Activated CD4-positive, alpha-beta T cell treated with anti-CD3 and anti-CD28 coated beads, Interleukin-2, amount 10 ng/mL, durations not matched to agents 7 days and 5 days (primary cell): ENCODE measurements at regions of chr6 and their contacts with region 1.

Region 1: DNA sequence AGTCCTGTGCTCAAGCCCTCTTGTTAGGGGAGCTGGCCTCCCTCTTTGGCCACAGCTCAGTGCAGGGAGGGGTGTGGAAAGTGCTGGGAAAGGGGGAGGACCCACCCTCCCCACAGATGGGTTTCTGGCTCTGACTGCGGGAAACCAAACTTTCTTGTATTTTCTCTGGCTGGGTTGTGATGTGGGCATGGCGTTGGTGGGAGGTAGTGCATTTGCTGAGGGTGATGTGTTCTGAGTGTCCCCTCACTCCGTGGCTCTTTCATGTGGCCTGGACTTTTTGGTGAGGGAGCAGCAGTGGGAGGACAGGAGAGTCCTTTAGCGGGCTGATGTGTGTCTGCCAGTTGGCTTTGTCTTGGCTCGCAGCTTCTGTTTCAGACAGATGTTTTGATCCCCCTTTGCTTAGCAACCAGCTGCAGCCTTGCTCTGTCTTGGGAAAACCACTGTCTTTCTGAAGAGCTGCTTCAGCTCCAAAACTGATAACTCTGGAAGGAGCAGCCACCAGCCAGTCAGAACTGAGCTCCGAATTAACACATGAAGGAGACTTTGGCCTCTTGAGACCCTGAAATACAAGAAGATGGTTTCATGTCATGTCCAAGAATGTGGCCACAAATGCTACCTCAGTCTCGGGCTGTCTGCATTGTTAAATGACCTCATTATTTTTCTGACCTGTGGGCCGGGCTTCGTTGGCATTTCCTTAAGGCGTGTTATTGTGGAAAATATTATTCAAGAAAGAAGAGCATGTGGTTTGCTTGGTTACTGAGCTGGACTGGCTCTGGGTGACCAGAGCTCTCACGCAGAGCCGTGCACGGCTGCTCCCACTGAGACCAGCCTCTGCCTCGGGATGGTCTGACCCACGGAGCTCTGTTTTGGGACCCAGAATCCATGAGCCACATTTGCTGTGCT is 21.5 kb downstream of the SYNJ2 start:
- DNase-seq: peak; percentile 21
- H3K4me3 Mint-ChIP-seq: no peak overlapping the region
- H3K27ac Mint-ChIP-seq: peak overlapping the region; percentile 20
- H3K4me1 Mint-ChIP-seq: peaks cover 54% of the 10 kb centered on the region
- H3K27me3 Mint-ChIP-seq: no peaks in the 10 kb centered on the region

Region 2: GRCh38 chr6:157893238-157893637 is 110.0 kb before region 1 on chr6:
- CTCF ChIA-PET with region 1: no interaction called
- POLR2A ChIA-PET with region 1: no interaction called
- DNase-seq: peak; percentile 46
- H3K4me3 Mint-ChIP-seq: no peak overlapping the region
- H3K27ac Mint-ChIP-seq: no peak overlapping the region
- H3K4me1 Mint-ChIP-seq: peaks cover 35% of the 10 kb centered on the region
- H3K27me3 Mint-ChIP-seq: no peaks in the 10 kb centered on the region

Region 3: DNA sequence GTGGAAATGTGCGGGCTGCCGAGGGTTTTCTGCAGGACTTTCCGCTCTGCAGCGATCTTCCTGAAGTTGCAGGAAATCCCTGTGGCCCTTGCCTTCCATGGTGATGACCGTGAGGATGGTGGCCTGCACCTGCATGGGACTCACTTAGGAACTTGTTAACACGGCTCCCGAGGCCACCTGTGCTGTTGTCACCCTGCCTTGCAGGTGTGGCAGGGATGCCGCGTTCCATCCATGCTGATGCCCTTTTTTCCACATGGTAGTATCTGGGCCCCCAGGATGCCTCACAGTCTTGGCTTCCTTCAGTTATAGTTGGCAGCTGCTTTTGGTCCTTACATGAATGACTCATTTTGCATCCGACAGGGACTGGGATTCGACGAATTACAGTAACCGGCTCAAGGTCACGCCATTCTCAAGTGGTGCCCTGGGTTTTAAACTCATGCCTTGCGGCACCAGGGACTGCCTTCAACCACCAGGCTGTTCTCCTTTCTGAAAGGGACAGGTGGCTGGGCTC is 15.7 kb after region 1 on chr6:
- CTCF ChIA-PET with region 1: interaction called, 11 read pairs
- POLR2A ChIA-PET with region 1: no interaction called
- DNase-seq: no peak
- H3K4me3 Mint-ChIP-seq: no peak overlapping the region
- H3K27ac Mint-ChIP-seq: no peak overlapping the region
- H3K4me1 Mint-ChIP-seq: peaks cover 14% of the 10 kb centered on the region
- H3K27me3 Mint-ChIP-seq: no peaks in the 10 kb centered on the region